ENCODE measurements at regions of chr3 and their contacts with region 1.

Region 1: GRCh38 chr3:183497313-183497712 is 58.2 kb downstream of the KLHL6 start:
- DNase-seq: no peak
- ATAC-seq: no peak; the same call in 2 of the 3 replicates
- H3K4me3 ChIP-seq: no peak overlapping the region
- H3K27ac ChIP-seq: no peak overlapping the region
- H3K4me1 ChIP-seq: no peaks in the 10 kb centered on the region
- H3K27me3 ChIP-seq: no peaks in the 10 kb centered on the region
- CTCF ChIP-seq: no peak
- EP300 ChIP-seq: no peak
- POLR2A ChIP-seq: no peak
- RAD21 ChIP-seq: no peak

Region 2: DNA sequence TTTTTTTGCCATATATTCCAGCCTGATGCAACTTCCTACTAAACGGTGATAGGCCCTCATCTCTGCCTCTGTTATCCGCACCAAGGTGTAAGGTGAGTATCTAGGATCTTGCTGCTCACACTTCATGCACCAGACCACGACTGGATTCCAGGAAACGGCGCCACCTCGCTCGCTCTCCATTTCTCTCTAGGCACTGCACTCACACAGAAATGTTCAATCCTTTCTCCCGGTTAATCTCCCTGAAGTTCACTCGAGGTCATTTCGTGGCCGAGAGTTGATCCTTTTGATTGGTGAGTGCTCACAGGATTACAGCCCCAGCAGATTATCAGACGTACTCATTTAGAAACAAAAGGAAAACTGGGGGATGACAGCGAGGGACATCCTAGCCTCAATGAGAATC is 97.0 kb before region 1 on chr3:
- CTCF ChIA-PET with region 1: no interaction called
- POLR2A ChIA-PET with region 1: no interaction called
- RAD21 ChIA-PET with region 1: no interaction called
- SMC1A ChIA-PET with region 1: no interaction called
- in situ Hi-C with region 1: no loop called
- intact Hi-C with region 1: no loop called
- DNase-seq: no peak
- ATAC-seq: no peak
- H3K4me3 ChIP-seq: no peak overlapping the region
- H3K27ac ChIP-seq: no peak overlapping the region
- H3K4me1 ChIP-seq: no peaks in the 10 kb centered on the region
- H3K27me3 ChIP-seq: no peaks in the 10 kb centered on the region; a peak in 1 of 4 replicates
- CTCF ChIP-seq: no peak
- EP300 ChIP-seq: no peak
- POLR2A ChIP-seq: no peak
- RAD21 ChIP-seq: no peak

Region 3: GRCh38 chr3:183455089-183455488 is 42.2 kb before region 1 on chr3:
- CTCF ChIA-PET with region 1: no interaction called
- POLR2A ChIA-PET with region 1: no interaction called
- RAD21 ChIA-PET with region 1: no interaction called
- SMC1A ChIA-PET with region 1: no interaction called
- in situ Hi-C with region 1: no loop called
- intact Hi-C with region 1: no loop called
- DNase-seq: no peak
- ATAC-seq: no peak
- H3K4me3 ChIP-seq: no peak overlapping the region
- H3K27ac ChIP-seq: no peak overlapping the region
- H3K4me1 ChIP-seq: no peaks in the 10 kb centered on the region
- H3K27me3 ChIP-seq: no peaks in the 10 kb centered on the region
- CTCF ChIP-seq: no peak
- EP300 ChIP-seq: no peak
- POLR2A ChIP-seq: no peak
- RAD21 ChIP-seq: no peak

Region 4: GRCh38 chr3:183481582-183481981 is 15.7 kb before region 1 on chr3:
- CTCF ChIA-PET with region 1: interaction called, 11 read pairs
- POLR2A ChIA-PET with region 1: interaction called, 8 read pairs
- RAD21 ChIA-PET with region 1: interaction called, 3 read pairs
- SMC1A ChIA-PET with region 1: interaction called, 7 read pairs
- in situ Hi-C with region 1: no loop called
- intact Hi-C with region 1: no loop called
- DNase-seq: no peak
- ATAC-seq: peak; percentile 6; the same call in 2 of the 3 replicates
- H3K4me3 ChIP-seq: no peak overlapping the region
- H3K27ac ChIP-seq: no peak overlapping the region
- H3K4me1 ChIP-seq: no peaks in the 10 kb centered on the region
- H3K27me3 ChIP-seq: no peaks in the 10 kb centered on the region
- CTCF ChIP-seq: no peak
- EP300 ChIP-seq: no peak
- POLR2A ChIP-seq: no peak
- RAD21 ChIP-seq: no peak